ENCODE measurements at regions of chr12 and their contacts with region 1.

Region 1: GRCh38 chr12:24754690-24755638 is 193.9 kb downstream of the BCAT1 start:
- DNase-seq: no peak
- H3K4me3 ChIP-seq: no peak overlapping the region
- H3K27ac ChIP-seq: no peak overlapping the region
- H3K4me1 ChIP-seq: no peaks in the 10 kb centered on the region
- H3K27me3 ChIP-seq: no peaks in the 10 kb centered on the region
- CTCF ChIP-seq: no peak
- POLR2A ChIP-seq: no peak

Region 2: DNA sequence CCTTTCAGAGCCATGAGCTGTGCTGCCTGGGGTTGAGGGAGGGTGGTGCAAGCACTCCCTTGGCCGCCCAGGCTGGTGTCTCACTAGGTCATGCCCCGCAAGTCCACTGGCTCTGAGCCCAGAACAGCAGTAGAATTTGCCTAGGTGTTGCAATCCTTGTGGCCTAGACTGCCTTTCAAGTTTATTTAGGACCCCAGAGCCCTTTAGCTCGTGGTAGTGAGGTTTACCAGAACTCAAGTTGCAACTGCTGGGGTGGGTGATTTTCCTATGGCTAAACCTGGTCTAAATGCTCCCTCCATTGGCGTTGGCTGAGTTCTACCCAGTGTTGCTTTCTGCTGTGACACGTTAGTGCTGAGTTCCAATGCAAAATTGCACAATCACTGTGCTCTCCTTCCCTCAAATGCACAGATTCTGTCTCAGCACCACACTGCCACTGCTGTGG is 93.3 kb before region 1 on chr12:
- intact Hi-C with region 1: no loop called
- DNase-seq: no peak
- H3K4me3 ChIP-seq: no peak overlapping the region
- H3K27ac ChIP-seq: no peak overlapping the region
- H3K4me1 ChIP-seq: no peaks in the 10 kb centered on the region
- H3K27me3 ChIP-seq: no peaks in the 10 kb centered on the region
- CTCF ChIP-seq: no peak
- POLR2A ChIP-seq: no peak

Region 3: DNA sequence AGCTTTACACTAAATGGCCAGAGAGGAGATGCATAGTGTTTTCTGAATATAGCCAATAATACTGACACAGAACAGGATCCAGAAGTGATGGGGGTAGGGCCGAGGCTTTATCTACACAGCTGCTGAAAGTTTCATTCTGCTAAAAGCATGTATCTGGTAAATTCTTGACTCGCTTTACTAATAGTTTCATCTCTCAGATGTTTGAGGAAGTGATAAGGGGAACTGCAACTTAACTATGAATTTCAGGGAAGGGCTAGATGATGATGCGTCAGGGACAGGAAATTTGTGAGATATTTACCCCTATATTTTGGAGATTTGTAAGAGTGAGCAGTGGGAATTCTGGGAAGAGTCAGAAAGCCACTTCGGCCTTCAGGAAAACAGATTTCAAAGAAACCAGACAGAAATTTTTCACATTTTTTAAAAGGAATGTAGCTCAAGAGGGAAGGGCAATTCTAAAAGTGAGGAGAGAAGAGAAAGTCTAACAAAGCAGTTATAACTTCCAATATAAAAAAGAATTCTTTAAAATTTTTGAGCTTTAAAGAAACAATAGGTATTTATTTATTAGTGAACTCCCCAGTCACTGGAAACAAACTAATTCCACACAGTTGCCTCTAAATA is 49.1 kb before region 1 on chr12:
- intact Hi-C with region 1: loop called (anchors 10 kb)
- DNase-seq: no peak
- H3K4me3 ChIP-seq: no peak overlapping the region
- H3K27ac ChIP-seq: no peak overlapping the region
- H3K4me1 ChIP-seq: no peaks in the 10 kb centered on the region
- H3K27me3 ChIP-seq: no peaks in the 10 kb centered on the region
- CTCF ChIP-seq: no peak
- POLR2A ChIP-seq: no peak